Sigmoid colon (tissue), 7 donors: ENCODE measurements at regions of chr7 and their contacts with region 1.

Region 1: GRCh38 chr7:73718905-73719805 is at the start of gene STX1A:
- DNase-seq: peak; percentile 84
- H3K4me3 ChIP-seq: peak within 1 kb of the TSS; percentile 58 to 97 (median 86)
- H3K27ac ChIP-seq: peak within 1 kb of the TSS; percentile 65 to 85 (median 76)
- H3K4me1 ChIP-seq: peaks cover 0 to 60% (median 43%) of the 10 kb centered on the region in 4 donors
- H3K27me3 ChIP-seq: no peaks in the 10 kb centered on the region
- CTCF ChIP-seq: no peak
- EP300 ChIP-seq: no peak
- POLR2A ChIP-seq: no peak
- total RNA-seq, gene STX1A: 16.1 to 24.6 (median 19.8) TPM

Region 2: GRCh38 chr7:73667344-73668102 is 51.6 kb before region 1 on chr7 and contains the start of gene VPS37D:
- intact Hi-C with region 1: loop called (anchors 5 kb)
- DNase-seq: peak; percentile 94
- H3K4me3 ChIP-seq: peak within 1 kb of the TSS; percentile 49 to 80 (median 76)
- H3K27ac ChIP-seq: peak within 1 kb of the TSS in 3 of 4 donors; percentile 25 to 66 (median 41)
- H3K4me1 ChIP-seq: peaks cover 0 to 21% (median 20%) of the 10 kb centered on the region in 4 donors
- H3K27me3 ChIP-seq: no peaks in the 10 kb centered on the region
- CTCF ChIP-seq: peak in 1 of 4 experiments; percentile 80
- EP300 ChIP-seq: no peak
- POLR2A ChIP-seq: no peak
- total RNA-seq, gene VPS37D: 1.6 to 8.7 (median 4.4) TPM

Region 3: GRCh38 chr7:73683056-73683964 is 35.8 kb before region 1 on chr7 and contains the starts of genes BUD23 and DNAJC30:
- intact Hi-C with region 1: loop called (anchors 2 kb)
- DNase-seq: peak; percentile 99
- H3K4me3 ChIP-seq: peak within 1 kb of the TSS; percentile 66 to 92 (median 81)
- H3K27ac ChIP-seq: peak within 1 kb of the TSS; percentile 81 to 89 (median 85)
- H3K4me1 ChIP-seq: peaks cover 0 to 42% (median 37%) of the 10 kb centered on the region in 4 donors
- H3K27me3 ChIP-seq: no peaks in the 10 kb centered on the region
- CTCF ChIP-seq: no peak
- EP300 ChIP-seq: no peak
- POLR2A ChIP-seq: peak; percentile 50 to 66
- total RNA-seq, gene BUD23: 36.8 to 42.4 (median 39.0) TPM
- total RNA-seq, gene DNAJC30: 3.3 to 7.6 (median 5.8) TPM

Region 4: GRCh38 chr7:73738612-73739374 is 19.6 kb after region 1 on chr7 and contains the start of gene ABHD11:
- intact Hi-C with region 1: loop called (anchors 2 kb)
- DNase-seq: peak; percentile 100
- H3K4me3 ChIP-seq: peak within 1 kb of the TSS; percentile 66 to 88 (median 80)
- H3K27ac ChIP-seq: peak within 1 kb of the TSS; percentile 87 to 94 (median 90)
- H3K4me1 ChIP-seq: peaks cover 0 to 29% (median 17%) of the 10 kb centered on the region in 4 donors
- H3K27me3 ChIP-seq: no peaks in the 10 kb centered on the region
- CTCF ChIP-seq: no peak
- EP300 ChIP-seq: no peak
- POLR2A ChIP-seq: peak; percentile 78 to 82
- total RNA-seq, gene ABHD11: 5.4 to 13.0 (median 9.2) TPM